MCF 10A (cell line): ENCODE measurements at regions of chrX and their contacts with region 1.

Region 1: DNA sequence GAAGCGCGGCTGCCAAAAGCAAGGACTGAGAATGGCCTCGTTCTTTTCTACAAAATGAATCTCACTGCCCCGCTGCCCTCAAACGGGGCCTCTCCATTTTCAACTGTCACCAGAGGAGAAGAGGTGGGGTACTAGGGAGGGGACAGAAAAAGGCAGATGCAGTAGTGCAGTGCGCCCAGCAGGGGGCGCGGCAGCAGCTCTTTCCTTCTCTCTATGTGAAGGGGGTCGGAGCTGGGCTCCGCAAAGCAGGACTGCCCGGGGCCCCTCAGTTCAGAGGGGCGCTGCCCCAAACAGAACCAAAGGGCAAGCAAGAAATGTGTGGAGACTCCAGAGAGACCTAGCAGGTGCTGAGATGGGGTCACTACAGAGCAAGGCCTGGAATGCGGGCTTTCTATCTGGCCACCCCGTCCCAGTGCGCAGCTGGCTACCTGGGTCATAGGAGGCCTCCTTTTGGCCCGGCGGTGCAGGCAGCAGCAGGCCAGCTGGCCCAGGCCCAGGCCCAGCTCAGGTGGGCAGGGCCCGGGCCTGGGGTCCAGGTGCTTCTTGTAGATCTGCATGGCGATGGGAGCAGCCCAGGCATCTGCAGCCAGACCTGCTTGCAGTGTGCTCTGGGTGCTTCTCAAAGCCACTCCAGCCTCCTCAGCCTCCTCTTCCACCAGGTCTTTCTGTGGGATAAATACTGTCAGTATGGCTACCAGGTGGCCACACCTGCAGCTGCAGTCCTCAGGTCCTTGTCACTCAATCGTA is 5.9 kb downstream of the IRAK1 start:
- DNase-seq: peak; percentile 32
- H3K4me3 Mint-ChIP-seq: no peak overlapping the region
- H3K27ac Mint-ChIP-seq: no peak overlapping the region
- H3K4me1 Mint-ChIP-seq: peaks cover 9% of the 10 kb centered on the region
- H3K27me3 Mint-ChIP-seq: peaks cover 12% of the 10 kb centered on the region
- CTCF ChIP-seq: peak; percentile 92

Region 2: GRCh38 chrX:153959649-153960048 is 54.1 kb before region 1 on chrX:
- CTCF ChIA-PET with region 1: no interaction called
- POLR2A ChIA-PET with region 1: no interaction called
- intact Hi-C with region 1: no loop called
- DNase-seq: no peak
- H3K4me3 Mint-ChIP-seq: no peak overlapping the region
- H3K27ac Mint-ChIP-seq: no peak overlapping the region
- H3K4me1 Mint-ChIP-seq: no peaks in the 10 kb centered on the region
- H3K27me3 Mint-ChIP-seq: no peaks in the 10 kb centered on the region
- CTCF ChIP-seq: no peak

Region 3: GRCh38 chrX:153981231-153981630 is 32.6 kb before region 1 on chrX:
- CTCF ChIA-PET with region 1: interaction called, 15 read pairs
- POLR2A ChIA-PET with region 1: interaction called, 3 read pairs
- intact Hi-C with region 1: no loop called
- DNase-seq: no peak
- H3K4me3 Mint-ChIP-seq: no peak overlapping the region
- H3K27ac Mint-ChIP-seq: no peak overlapping the region
- H3K4me1 Mint-ChIP-seq: no peaks in the 10 kb centered on the region
- H3K27me3 Mint-ChIP-seq: no peaks in the 10 kb centered on the region
- CTCF ChIP-seq: no peak

Region 4: GRCh38 chrX:154002215-154002719 is 11.5 kb before region 1 on chrX:
- CTCF ChIA-PET with region 1: interaction called, 10 read pairs
- POLR2A ChIA-PET with region 1: no interaction called
- intact Hi-C with region 1: no loop called
- DNase-seq: peak; percentile 71
- H3K4me3 Mint-ChIP-seq: no peak overlapping the region
- H3K27ac Mint-ChIP-seq: no peak overlapping the region
- H3K4me1 Mint-ChIP-seq: peaks cover 6% of the 10 kb centered on the region
- H3K27me3 Mint-ChIP-seq: peaks cover 66% of the 10 kb centered on the region
- CTCF ChIP-seq: no peak

Region 5: DNA sequence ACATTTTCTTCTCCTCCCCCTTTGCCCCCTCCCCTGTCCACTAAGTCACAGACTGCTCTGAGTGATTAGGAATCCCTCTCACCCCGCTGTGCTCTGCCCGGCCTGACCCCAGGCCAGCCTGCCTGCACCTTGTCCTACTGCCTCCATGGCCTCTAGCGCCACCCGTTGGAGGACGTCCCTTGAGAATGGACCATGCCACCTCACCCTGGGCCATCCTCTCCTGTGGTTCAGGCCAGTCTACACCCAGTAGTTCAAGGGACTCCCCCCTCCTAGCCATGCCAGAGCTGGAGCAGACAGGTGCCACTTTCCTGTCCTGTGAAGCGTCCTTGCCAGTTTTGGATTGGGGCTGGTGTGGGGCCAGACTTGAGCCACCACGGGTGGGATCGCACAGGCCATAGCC is 15.7 kb after region 1 on chrX:
- CTCF ChIA-PET with region 1: interaction called, 29 read pairs
- POLR2A ChIA-PET with region 1: interaction called, 7 read pairs
- intact Hi-C with region 1: no loop called
- DNase-seq: no peak
- H3K4me3 Mint-ChIP-seq: no peak overlapping the region
- H3K27ac Mint-ChIP-seq: no peak overlapping the region
- H3K4me1 Mint-ChIP-seq: no peaks in the 10 kb centered on the region
- H3K27me3 Mint-ChIP-seq: peaks cover 61% of the 10 kb centered on the region
- CTCF ChIP-seq: no peak

Region 6: DNA sequence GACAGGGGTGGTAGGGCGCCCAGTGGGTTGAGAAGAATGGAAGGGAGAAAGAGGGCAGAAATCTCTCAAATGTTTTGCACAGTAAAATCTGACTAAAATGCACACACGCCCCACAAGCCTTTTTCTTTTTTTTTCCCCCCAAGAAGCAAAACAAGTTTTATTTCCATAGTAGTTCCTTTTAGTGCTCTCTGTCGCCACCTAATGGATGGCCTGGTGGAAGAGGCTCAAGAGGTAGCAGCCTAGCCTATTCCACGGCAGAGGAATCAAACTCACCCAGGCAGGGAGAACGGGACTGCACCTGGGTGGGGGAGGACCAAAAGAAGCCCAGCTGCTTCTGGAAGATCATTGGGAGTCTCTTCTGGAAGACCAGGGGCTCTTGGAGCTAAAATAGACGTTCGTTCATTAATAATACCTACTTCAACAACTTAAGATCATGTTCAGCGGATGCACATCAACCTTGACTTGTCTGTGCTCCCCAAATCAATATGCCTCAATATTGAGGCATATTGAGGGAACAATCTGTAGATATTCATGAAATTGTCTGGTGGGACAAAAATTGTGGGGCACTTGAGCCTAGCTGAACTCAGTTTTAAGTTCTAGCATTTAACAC is 37.5 kb after region 1 on chrX:
- CTCF ChIA-PET with region 1: interaction called, 35 read pairs
- POLR2A ChIA-PET with region 1: interaction called, 4 read pairs
- intact Hi-C with region 1: loop called (anchors 2 kb)
- DNase-seq: peak; percentile 72
- H3K4me3 Mint-ChIP-seq: no peak overlapping the region
- H3K27ac Mint-ChIP-seq: no peak overlapping the region
- H3K4me1 Mint-ChIP-seq: peaks cover 6% of the 10 kb centered on the region
- H3K27me3 Mint-ChIP-seq: peaks cover 57% of the 10 kb centered on the region
- CTCF ChIP-seq: peak; percentile 49

Region 7: GRCh38 chrX:154534862-154535670 is 521.3 kb after region 1 on chrX:
- CTCF ChIA-PET with region 1: interaction called, 19 read pairs
- POLR2A ChIA-PET with region 1: no interaction called
- intact Hi-C with region 1: no loop called
- DNase-seq: peak; percentile 86
- H3K4me3 Mint-ChIP-seq: no peak overlapping the region
- H3K27ac Mint-ChIP-seq: peak overlapping the region; percentile 35
- H3K4me1 Mint-ChIP-seq: no peaks in the 10 kb centered on the region
- H3K27me3 Mint-ChIP-seq: no peaks in the 10 kb centered on the region
- CTCF ChIP-seq: peak; percentile 100